ENCODE measurements at regions of chr17 and their contacts with region 1.

Region 1: DNA sequence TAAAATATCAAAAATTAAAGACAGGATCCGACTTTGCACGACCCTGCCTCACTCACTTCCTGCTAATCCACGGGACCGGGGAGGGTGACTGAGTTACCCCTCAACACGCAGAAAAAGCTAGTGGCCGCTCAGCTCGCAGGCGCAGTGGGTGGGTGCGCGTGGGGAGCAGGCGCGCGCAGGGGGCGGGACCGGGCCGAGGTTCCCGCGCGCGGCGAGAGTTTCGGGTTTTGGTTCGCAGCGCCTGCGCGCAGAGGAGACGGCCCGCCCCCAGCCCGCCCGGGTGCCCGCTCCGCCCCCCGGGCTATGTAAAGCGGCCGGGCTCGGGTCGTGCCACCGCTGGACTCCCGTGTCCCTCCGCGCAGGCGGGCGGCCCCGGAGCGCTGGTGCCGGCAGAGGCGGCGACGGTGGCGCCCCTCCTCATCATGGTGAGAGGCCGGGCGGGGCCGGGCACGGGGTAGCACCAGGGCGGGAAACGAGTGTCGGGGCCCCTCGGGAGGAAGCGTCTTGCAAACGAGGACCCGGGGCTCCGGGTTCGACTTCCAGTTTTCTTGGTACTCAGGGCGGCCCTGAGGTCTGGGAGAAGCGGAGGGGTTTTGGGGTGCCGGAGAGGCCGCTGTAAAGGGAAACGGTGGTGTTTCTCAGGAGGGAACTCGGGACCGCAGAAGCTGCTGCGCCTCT is at the start of gene CNP:
- DNase-seq: peak; percentile 82
- ATAC-seq: peak; percentile 73
- H3K4me3 ChIP-seq: peak within 1 kb of the TSS; percentile 92 to 96 (median 93)
- H3K27ac ChIP-seq: peak within 1 kb of the TSS; percentile 83
- H3K4me1 ChIP-seq: peaks cover 68% of the 10 kb centered on the region
- H3K27me3 ChIP-seq: peaks cover 0 to 11% of the 10 kb centered on the region in 2 experiments; a peak in 2 of 5 replicates
- CTCF ChIP-seq: no peak
- EP300 ChIP-seq: 0 out of 4 replicates have a peak, but pooled peaks have one; percentile 22 to 33
- POLR2A ChIP-seq: peak; percentile 59 to 95; a peak in 3 of 4 replicates
- RAD21 ChIP-seq: peak; percentile 72
- total RNA-seq, gene CNP: 161 and 170 TPM in 2 replicates

Region 2: DNA sequence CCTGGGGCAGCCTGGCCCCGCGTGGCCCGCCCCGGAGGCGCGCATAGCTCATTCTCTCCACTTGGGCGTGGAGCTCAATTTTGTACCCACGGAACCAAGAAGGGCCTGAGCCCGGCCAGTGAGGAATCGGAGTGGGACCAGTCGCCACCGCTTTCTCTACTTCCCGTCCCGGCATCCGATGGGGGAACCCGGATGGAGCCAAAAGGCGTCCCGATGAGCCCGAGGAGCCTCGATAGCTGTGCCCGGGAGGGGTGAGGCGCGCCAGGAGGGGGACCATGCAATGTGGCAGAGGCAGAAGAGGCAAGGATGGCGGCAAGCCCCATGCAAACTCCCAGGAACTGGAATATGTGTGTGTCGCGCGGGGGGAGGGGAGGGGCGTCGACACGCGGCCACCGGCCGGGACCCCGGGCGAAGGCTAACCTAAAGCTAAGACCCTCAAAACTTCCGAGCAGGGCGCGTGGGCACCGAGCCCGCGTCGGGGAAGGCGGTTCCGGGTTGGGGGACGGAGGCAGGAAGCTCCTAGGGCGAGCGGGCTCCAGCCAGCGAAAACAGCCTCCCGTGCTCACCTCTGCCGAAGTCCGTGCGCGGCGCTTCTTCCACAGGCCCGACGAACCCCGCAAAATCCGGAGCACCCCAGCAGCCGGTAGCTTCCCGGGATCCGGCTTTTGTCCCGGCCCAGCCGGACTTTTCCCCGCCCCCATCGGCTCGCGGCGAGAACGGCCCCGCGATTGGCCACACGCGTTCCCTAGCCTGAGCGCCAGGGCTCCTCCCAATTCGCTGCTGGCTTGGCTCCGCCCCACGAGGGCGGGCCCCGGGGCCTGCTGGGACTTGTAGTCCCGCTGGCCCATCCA is 48.1 kb before region 1 on chr17 and contains the start of gene ACLY:
- CTCF ChIA-PET with region 1: no interaction called
- POLR2A ChIA-PET with region 1: interaction called, 19 read pairs
- in situ Hi-C with region 1: no loop called
- intact Hi-C with region 1: no loop called
- DNase-seq: peak; percentile 97
- ATAC-seq: peak; percentile 93
- H3K4me3 ChIP-seq: peak within 1 kb of the TSS; percentile 96 to 98 (median 97)
- H3K27ac ChIP-seq: peak within 1 kb of the TSS; percentile 81
- H3K4me1 ChIP-seq: peaks cover 71% of the 10 kb centered on the region
- H3K27me3 ChIP-seq: no peaks in the 10 kb centered on the region; a peak in 1 of 5 replicates
- CTCF ChIP-seq: no peak
- EP300 ChIP-seq: 0 out of 4 replicates have a peak, but pooled peaks of 1 of the 2 experiments have one; percentile 45
- POLR2A ChIP-seq: peak; percentile 88 to 97
- RAD21 ChIP-seq: no peak; the same call in none of the 2 replicates
- total RNA-seq, gene ACLY: 218 and 277 TPM in 2 replicates

Region 3: GRCh38 chr17:42002792-42003301 is 36.2 kb after region 1 on chr17:
- CTCF ChIA-PET with region 1: no interaction called
- POLR2A ChIA-PET with region 1: interaction called, 50 read pairs
- in situ Hi-C with region 1: no loop called
- intact Hi-C with region 1: no loop called
- DNase-seq: peak; percentile 93
- ATAC-seq: peak; percentile 84
- H3K4me3 ChIP-seq: peak overlapping the region in 1 of 3 experiments; percentile 35; a peak in 1 of 6 replicates
- H3K27ac ChIP-seq: peak overlapping the region; percentile 77
- H3K4me1 ChIP-seq: peaks cover 42% of the 10 kb centered on the region
- H3K27me3 ChIP-seq: no peaks in the 10 kb centered on the region
- CTCF ChIP-seq: no peak
- EP300 ChIP-seq: peak in 1 of 2 experiments; percentile 39; a peak in 1 of 4 replicates
- POLR2A ChIP-seq: no peak
- RAD21 ChIP-seq: no peak

Region 4: DNA sequence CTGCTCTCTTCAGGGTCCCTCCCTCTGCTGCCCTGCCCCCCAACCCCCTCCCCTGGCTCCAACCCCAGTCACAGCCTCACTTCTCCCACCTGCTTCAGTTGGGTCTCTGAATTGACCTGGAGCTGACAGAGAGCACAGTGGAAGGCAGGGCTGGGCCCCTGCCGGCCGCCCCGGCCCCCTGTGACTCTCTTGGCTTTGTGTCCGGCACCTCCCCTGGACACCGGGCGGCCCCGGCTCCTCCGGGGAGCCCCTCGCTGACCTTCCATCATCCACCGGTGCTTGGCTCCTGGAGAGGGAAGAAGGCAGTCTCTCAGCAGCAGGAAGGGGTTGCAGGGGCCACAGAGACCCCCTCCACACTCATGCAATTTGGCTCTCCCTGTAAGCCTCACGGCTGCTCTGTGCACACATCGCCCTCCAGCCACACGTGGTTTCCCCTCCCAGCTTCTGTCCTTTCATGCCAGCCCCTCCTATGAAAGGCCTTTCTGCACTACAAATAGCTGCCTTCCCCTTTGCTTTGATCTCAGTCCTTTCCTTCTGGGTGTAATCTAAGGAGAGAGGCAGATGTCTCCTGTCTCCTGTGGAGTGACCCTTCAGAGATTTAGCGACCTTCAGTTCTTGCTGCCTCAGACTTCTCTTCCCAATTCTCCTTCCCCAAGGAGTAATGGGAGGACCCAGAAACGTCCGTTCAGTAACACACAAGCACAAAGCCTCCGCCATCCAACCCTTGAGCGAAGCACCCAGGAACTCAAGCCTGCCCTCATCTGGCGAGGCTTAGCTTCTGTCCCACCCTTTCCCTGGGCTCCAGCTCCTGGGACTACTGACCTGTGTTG is 61.6 kb after region 1 on chr17:
- CTCF ChIA-PET with region 1: interaction called, 26 read pairs
- POLR2A ChIA-PET with region 1: interaction called, 35 read pairs
- in situ Hi-C with region 1: no loop called
- intact Hi-C with region 1: loop called (anchors 1 kb)
- DNase-seq: peak; percentile 79
- ATAC-seq: peak; percentile 88
- H3K4me3 ChIP-seq: peak overlapping the region in 2 of 3 experiments; percentile 8 to 63; a peak in 4 of 6 replicates
- H3K27ac ChIP-seq: no peak overlapping the region
- H3K4me1 ChIP-seq: peaks cover 61% of the 10 kb centered on the region
- H3K27me3 ChIP-seq: no peaks in the 10 kb centered on the region
- CTCF ChIP-seq: peak; percentile 93
- EP300 ChIP-seq: no peak
- POLR2A ChIP-seq: peak in 1 of 2 experiments; percentile 45; a peak in 1 of 4 replicates
- RAD21 ChIP-seq: peak; percentile 56

Region 5: DNA sequence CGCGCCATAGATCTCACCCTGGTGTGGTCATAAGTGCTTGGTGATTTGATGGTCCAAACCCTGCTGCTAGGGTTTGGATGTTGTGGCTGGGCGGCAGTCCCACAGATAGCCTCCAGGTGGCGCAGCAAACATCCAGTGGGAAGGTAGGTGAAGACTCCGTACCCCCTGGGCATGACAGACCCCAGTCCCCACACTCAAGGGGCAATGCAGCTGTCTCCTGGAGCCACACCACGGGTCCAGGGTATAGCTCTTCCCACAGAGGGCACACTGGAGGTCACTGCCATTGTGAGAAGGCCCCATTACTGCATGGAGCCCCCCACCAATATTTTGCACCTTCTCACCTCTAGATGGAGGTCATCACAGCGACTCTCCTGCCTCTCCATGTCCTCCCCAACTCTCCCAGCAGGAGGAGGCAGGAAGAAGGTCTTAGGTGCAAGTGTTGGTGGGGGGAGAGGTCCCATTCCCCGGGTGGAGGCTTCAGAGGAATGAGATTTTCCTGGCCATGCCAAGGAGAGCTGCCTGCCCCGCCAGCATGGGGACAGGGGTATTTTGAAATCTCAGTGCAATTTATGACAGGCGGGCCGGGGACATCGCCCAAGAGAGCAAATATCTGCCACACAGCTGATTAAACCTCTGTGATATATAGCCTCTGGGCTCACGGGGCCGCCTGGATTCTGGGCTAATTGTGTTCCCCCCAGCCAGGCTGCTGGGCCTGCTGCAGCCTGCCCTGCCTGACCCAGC is 100.9 kb after region 1 on chr17:
- CTCF ChIA-PET with region 1: interaction called, 9 read pairs
- POLR2A ChIA-PET with region 1: interaction called, 3 read pairs
- in situ Hi-C with region 1: loop called (anchors 5 kb)
- intact Hi-C with region 1: loop called (anchors 1 kb)
- DNase-seq: peak; percentile 84
- ATAC-seq: peak; percentile 81
- H3K4me3 ChIP-seq: no peak overlapping the region
- H3K27ac ChIP-seq: no peak overlapping the region
- H3K4me1 ChIP-seq: peaks cover 13% of the 10 kb centered on the region
- H3K27me3 ChIP-seq: peaks cover 2 to 25% of the 10 kb centered on the region in 2 experiments; a peak in 3 of 5 replicates
- CTCF ChIP-seq: peak; percentile 96
- EP300 ChIP-seq: no peak
- POLR2A ChIP-seq: no peak
- RAD21 ChIP-seq: peak; percentile 96

Region 6: DNA sequence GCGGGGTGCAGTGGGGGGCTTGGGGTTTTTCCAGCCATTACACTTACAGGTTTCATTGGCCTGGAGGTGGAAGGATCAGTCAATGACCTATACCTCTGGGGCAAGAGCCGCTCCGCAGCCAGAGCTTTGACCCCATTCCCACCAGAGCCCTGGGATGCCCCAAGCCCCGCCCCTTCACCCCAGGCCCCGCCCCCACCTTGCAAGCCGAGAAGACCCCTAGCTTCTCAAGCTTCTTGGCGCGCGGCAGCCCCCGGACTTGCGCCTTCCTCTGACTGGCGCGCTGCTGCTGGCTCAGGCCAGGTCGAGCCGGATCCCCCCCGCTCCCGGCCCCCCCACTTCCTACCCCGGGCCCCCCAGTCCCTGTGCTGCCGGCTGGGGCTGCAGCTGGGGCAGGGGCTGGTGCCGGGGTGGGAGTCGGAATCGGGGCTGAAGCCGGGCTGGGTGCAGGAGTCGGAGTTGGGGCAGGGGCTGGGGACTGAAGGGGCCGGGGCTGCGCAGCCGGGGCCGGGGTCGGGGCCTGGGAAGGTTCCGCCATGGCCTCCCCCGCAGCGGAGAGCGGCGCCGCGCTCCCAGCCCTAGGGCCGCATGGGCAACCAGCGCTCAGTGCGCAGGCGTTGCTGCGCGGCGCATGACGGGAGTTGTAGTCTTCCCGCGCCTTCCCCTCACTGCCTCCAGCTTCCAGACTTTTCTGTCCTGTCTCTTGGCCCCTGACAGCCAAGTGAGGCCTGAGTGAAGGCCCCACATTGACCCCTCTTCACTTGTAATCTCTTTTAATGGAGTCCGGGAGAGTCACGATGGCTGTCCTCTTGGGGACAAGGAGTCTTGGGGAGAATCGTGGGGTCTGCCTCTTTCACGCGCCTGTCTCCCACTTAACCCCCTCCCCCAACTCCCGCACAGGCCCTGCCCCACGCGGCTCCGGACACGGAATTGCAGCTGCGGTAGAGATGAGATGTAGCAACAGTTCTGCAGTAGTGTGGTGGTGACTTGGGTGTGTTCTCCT is 154.5 kb after region 1 on chr17 and contains the start of gene KAT2A:
- CTCF ChIA-PET with region 1: interaction called, 17 read pairs
- POLR2A ChIA-PET with region 1: interaction called, 16 read pairs
- in situ Hi-C with region 1: no loop called
- intact Hi-C with region 1: loop called (anchors 2 kb)
- DNase-seq: peak; percentile 73
- ATAC-seq: peak; percentile 90
- H3K4me3 ChIP-seq: peak within 1 kb of the TSS; percentile 76 to 85 (median 79)
- H3K27ac ChIP-seq: peak within 1 kb of the TSS; percentile 68
- H3K4me1 ChIP-seq: peaks cover 30% of the 10 kb centered on the region
- H3K27me3 ChIP-seq: no peaks in the 10 kb centered on the region
- CTCF ChIP-seq: 0 out of 2 replicates have a peak, but pooled peaks have one; percentile 26
- EP300 ChIP-seq: peak in 1 of 2 experiments; percentile 46; a peak in 2 of 4 replicates
- POLR2A ChIP-seq: peak; percentile 76 to 95
- RAD21 ChIP-seq: no peak
- total RNA-seq, gene KAT2A: 20.2 and 29.1 TPM in 2 replicates

Region 7: DNA sequence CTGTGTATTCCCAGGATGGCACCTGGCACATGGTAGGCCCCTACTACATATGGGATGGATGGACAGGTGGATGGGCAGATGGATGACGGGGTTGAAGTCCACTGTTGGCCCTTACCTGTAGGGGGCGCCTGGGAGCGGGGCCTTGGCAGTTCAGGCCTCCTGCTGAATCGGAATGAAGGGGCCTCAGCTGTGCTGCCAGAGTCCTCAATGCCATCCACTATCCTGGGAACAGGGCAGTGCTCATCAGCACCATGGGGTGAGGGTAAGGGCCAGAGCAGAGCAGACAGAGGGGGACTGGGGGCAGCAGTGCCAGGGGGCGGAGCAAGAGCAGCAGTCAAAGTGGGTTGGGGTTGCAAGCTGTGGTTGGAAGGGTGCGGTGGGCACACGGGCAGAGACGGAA is 196.5 kb after region 1 on chr17:
- CTCF ChIA-PET with region 1: no interaction called
- POLR2A ChIA-PET with region 1: no interaction called
- in situ Hi-C with region 1: no loop called
- intact Hi-C with region 1: no loop called
- DNase-seq: peak; percentile 49
- ATAC-seq: peak; percentile 44
- H3K4me3 ChIP-seq: peak overlapping the region in 1 of 3 experiments; percentile 41; a peak in 1 of 6 replicates
- H3K27ac ChIP-seq: no peak overlapping the region
- H3K4me1 ChIP-seq: peaks cover 54% of the 10 kb centered on the region
- H3K27me3 ChIP-seq: peaks cover 2 to 5% of the 10 kb centered on the region in 2 experiments; a peak in 2 of 5 replicates
- CTCF ChIP-seq: peak; percentile 81
- EP300 ChIP-seq: no peak
- POLR2A ChIP-seq: no peak
- RAD21 ChIP-seq: peak; percentile 53; the same call in 1 of the 2 replicates

Region 8: GRCh38 chr17:42459256-42459800 is 492.7 kb after region 1 on chr17:
- CTCF ChIA-PET with region 1: no interaction called
- POLR2A ChIA-PET with region 1: no interaction called
- in situ Hi-C with region 1: no loop called
- intact Hi-C with region 1: no loop called
- DNase-seq: peak; percentile 65
- ATAC-seq: peak; percentile 82
- H3K4me3 ChIP-seq: peak overlapping the region; percentile 85 to 93 (median 90)
- H3K27ac ChIP-seq: peak overlapping the region; percentile 79
- H3K4me1 ChIP-seq: peaks cover 67% of the 10 kb centered on the region
- H3K27me3 ChIP-seq: no peaks in the 10 kb centered on the region; a peak in 1 of 5 replicates
- CTCF ChIP-seq: peak; percentile 77
- EP300 ChIP-seq: no peak
- POLR2A ChIP-seq: no peak
- RAD21 ChIP-seq: 0 out of 2 replicates have a peak, but pooled peaks have one; percentile 7

Measured in HepG2 (cell line).